Posterior cingulate gyrus (tissue), 11 donors: ENCODE measurements at regions of chr9 and their contacts with region 1.

Region 1: GRCh38 chr9:98998441-98999151 is 54.9 kb downstream of the COL15A1 start:
- DNase-seq: peak in 9 of 10 donors; percentile 65 to 96 (median 85)

Region 2: GRCh38 chr9:98807070-98807810 is 191.4 kb before region 1 on chr9 and contains the start of gene GALNT12:
- intact Hi-C with region 1: loop called (anchors 5 kb)
- DNase-seq: peak in 9 of 10 donors; percentile 35 to 95 (median 61)

Region 3: GRCh38 chr9:98848450-98849149 is 150.0 kb before region 1 on chr9:
- intact Hi-C with region 1: loop called (anchors 2 kb)
- DNase-seq: peak; percentile 77 to 99 (median 94)

Region 4: GRCh38 chr9:98860871-98861293 is 137.7 kb before region 1 on chr9:
- intact Hi-C with region 1: loop called (anchors 1 kb)
- DNase-seq: peak in 6 of 10 donors; percentile 26 to 83 (median 46)

Region 5: DNA sequence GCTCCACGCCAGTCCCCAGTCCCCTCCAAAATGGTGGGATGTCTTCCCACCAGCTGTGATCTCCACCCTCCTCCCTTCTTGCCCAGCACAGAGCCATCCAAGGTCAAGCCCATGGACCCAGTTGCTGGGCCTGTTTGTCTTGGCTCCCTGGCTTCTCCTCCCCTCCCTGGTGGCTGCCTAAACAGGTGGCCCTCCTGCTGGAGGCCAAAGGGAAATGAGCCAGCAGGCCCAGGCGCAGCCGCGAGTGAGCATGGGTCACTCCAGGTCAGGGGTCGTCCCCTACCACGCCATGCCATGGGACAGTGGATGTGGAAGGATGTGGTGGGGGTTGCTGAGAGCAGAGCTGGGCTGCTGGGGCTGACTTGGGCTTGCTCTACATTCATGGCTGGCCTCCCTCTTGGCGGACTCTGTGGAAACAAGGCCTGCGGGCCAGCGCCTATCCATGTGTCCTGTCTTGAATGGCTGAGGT is 21.3 kb before region 1 on chr9:
- intact Hi-C with region 1: loop called (anchors 2 kb)
- DNase-seq: peak in 2 of 10 donors; percentile 63 to 65

Region 6: GRCh38 chr9:99140685-99141314 is 142.2 kb after region 1 on chr9:
- intact Hi-C with region 1: loop called (anchors 1 kb)
- DNase-seq: peak in 6 of 10 donors; percentile 17 to 88 (median 32)

Region 7: DNA sequence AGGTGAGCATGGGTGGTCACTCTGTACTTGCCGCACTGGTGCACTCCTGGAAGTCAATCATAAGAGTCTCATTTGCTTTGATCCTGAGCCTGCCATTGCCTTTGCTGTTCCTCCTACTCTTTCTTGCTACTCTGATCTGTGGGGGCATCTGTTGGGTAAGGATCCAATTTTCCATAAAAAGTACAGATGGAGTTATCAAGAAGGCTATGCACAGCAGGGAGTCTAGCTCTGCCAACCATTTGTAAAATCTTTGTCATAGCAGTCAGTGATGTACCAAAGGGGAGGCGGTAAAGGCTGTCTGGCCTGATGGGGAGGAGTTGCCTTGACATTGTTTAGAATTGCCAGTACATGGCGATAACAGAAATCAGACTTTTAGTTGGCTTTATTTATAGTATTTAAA is 1920.9 kb after region 1 on chr9:
- intact Hi-C with region 1: no loop called
- DNase-seq: no peak